HCT116 (cell line): ENCODE measurements at regions of chr16 and their contacts with region 1.

Region 1: DNA sequence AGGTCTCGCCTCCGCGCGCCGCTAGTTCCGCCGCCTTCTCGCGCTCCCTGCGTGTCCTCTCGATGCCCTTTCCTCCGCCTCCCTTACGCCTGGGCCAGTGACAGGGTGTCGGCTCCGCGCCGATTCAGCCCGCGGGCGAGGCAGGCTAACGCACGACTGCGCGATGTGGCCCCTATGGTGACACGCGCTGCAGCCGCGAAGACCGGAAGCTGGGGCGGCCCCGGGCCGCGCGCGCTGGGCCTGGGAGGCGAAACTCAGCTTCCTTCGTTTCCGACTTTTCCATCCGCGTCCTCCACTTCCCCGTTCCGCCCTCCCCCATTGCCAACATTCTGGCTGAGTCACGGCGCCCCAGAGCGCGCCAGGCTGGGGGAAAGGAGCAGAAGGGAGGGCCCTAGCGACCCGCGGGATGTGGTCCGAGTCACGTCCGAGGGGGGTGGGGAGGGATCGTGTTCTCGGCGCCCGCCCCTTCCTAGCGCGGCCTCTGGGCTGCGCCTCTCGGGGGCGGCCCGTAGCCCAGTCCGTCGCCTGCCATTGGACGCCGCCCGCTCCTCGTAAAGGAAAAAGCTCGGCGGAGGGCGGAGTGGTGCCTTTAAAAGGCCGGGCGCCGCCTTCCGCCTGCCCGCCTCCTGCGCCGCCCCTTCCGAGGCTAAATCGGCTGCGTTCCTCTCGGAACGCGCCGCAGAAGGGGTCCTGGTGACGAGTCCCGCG is at the start of gene ALDOA:
- DNase-seq: peak; percentile 93
- ATAC-seq: peak; percentile 85
- H3K4me3 ChIP-seq: peak within 1 kb of the TSS; percentile 98
- H3K27ac ChIP-seq: peak within 1 kb of the TSS; percentile 100
- H3K4me1 ChIP-seq: peaks cover 25 to 50% of the 10 kb centered on the region in 2 experiments
- H3K27me3 ChIP-seq: no peaks in the 10 kb centered on the region
- CTCF ChIP-seq: no peak
- POLR2A ChIP-seq: peak; percentile 40
- RAD21 ChIP-seq: no peak
- total RNA-seq, gene ALDOA: 2,423 TPM

Region 2: DNA sequence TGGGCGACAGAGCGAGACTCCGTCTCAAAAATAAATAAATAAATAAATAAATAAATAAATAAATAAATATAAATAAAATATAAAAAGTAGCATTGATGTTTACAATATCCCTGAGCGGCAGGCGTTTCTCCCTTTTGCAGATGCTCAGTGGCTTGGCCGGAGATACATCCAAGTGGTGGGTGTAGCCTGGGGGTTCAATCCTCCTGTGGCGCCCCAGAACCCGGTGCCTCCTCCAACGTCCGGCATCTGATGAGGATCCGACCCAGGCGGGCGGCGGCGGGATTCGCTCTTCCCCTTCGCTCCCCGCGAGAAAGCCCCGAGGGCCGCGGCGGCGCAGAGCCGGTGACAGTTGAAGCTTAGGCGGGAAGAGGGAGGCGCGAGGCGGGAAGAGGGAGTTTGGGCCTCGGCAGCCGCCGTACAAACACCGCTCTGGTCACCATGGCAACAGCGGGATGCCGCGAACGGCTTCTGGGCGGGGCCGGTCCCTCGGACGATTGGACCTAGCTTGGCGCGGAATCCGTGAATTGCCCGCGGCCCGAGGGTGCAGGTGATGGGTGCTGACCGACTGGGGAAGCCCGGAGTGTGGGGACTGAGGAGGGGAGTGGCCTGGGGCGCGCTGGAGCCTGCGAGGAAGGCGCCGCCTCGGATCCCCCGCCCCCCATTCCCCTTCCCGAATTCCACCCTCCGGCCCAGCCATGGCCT is 12.5 kb before region 1 on chr16:
- CTCF ChIA-PET with region 1: interaction called, 10 read pairs
- POLR2A ChIA-PET with region 1: interaction called, 13 read pairs
- RAD21 ChIA-PET with region 1: no interaction called
- intact Hi-C with region 1: no loop called
- DNase-seq: peak; percentile 85
- ATAC-seq: peak; percentile 79
- H3K4me3 ChIP-seq: peak overlapping the region; percentile 81 to 93
- H3K27ac ChIP-seq: peak overlapping the region; percentile 72
- H3K4me1 ChIP-seq: peaks cover 8 to 41% of the 10 kb centered on the region in 2 experiments; a peak in 3 of 4 replicates
- H3K27me3 ChIP-seq: no peaks in the 10 kb centered on the region
- CTCF ChIP-seq: no peak
- POLR2A ChIP-seq: no peak
- RAD21 ChIP-seq: no peak

Region 3: GRCh38 chr16:30075507-30076275 is 10.4 kb after region 1 on chr16 and contains the start of gene PPP4C:
- CTCF ChIA-PET with region 1: interaction called, 4 read pairs
- POLR2A ChIA-PET with region 1: interaction called, 12 read pairs
- RAD21 ChIA-PET with region 1: no interaction called
- intact Hi-C with region 1: no loop called
- DNase-seq: peak; percentile 68
- ATAC-seq: peak; percentile 86
- H3K4me3 ChIP-seq: peak within 1 kb of the TSS; percentile 88 to 99
- H3K27ac ChIP-seq: peak within 1 kb of the TSS; percentile 80
- H3K4me1 ChIP-seq: peaks cover 14 to 22% of the 10 kb centered on the region in 2 experiments; a peak in 3 of 4 replicates
- H3K27me3 ChIP-seq: no peaks in the 10 kb centered on the region
- CTCF ChIP-seq: no peak
- POLR2A ChIP-seq: peak; percentile 88
- RAD21 ChIP-seq: no peak
- total RNA-seq, gene PPP4C: 165 TPM

Region 4: DNA sequence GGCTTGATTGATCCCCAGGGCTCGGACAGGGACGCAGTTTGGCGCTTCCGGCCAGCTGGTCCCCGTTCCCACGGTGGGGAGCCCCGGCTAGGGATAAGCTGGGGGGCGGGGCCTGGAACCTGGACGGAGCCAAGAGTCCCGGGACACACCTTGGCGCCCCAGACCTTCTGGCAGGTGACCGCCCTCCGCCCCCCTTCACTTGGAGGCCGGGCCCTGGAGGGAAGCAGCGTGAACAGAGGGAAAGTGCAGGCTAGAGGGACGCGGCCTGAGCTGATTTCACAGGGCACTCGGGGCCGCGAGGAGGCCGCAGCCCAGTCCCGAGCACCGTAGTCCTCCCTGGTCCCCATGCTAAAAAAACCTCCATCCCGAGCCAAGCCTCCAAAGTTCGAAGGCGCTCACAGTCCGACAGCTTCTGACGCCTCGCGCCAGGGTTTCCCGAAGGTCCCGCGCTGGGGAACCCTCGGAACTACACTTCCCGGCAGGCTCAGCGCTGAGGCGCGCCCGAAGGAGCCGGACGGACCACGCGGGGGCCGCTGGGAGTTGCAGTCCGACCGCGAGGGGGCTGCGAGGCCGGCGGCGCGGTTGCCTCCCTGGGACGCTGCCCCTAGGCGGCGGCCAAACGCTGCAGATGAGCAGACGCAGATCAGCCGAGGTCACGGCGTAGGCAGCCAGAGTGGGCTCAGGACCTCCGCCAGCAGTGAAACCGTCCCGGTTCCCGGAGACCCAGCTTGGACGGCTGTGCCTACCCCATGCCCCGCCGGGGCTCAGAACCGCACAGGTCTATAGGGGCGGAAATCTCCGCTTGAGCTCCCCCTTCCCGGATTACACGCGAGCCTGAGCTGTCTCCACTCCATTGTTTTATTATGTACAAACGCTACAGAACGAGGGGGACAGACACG is 26.4 kb after region 1 on chr16 and contains the start of gene TBX6:
- CTCF ChIA-PET with region 1: interaction called, 28 read pairs
- POLR2A ChIA-PET with region 1: interaction called, 10 read pairs
- RAD21 ChIA-PET with region 1: no interaction called
- intact Hi-C with region 1: no loop called
- DNase-seq: peak; percentile 74
- ATAC-seq: peak; percentile 89
- H3K4me3 ChIP-seq: peak within 1 kb of the TSS; percentile 62 to 68
- H3K27ac ChIP-seq: peak within 1 kb of the TSS; percentile 77
- H3K4me1 ChIP-seq: peaks cover 14 to 62% of the 10 kb centered on the region in 2 experiments
- H3K27me3 ChIP-seq: no peaks in the 10 kb centered on the region
- CTCF ChIP-seq: peak; percentile 44 to 76 (median 63); a peak in 5 of 6 replicates
- POLR2A ChIP-seq: peak; percentile 4
- RAD21 ChIP-seq: peak; percentile 86
- total RNA-seq, gene TBX6: 1.4 TPM